ENCODE measurements at regions of chr3 and their contacts with region 1.

Region 1: DNA sequence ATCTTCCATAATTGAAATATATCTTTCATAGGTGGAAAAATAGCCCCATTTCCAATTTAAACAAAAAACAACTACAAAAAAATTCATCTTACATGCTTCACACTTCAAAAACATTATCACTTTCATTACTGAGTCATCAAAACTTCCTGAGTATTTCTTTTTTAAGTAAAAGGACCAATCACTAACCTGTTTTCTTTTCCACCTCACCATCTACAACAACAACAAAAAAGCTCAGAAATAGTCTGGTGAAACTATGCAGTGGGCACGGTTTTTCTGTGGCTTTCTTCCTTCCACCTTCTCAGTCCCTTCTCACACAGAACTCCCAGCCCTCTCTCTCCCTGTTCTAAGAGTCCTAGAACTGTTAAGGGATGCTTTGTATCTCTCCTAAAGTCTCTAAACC is 20.3 kb upstream of the TNIK start:
- DNase-seq: no peak
- H3K4me3 Mint-ChIP-seq: peak overlapping the region; percentile 1
- H3K27ac Mint-ChIP-seq: peak overlapping the region; percentile 63
- H3K4me1 Mint-ChIP-seq: peaks cover 15% of the 10 kb centered on the region
- H3K27me3 Mint-ChIP-seq: no peaks in the 10 kb centered on the region

Region 2: GRCh38 chr3:171491361-171491760 is 10.8 kb after region 1 on chr3:
- CTCF ChIA-PET with region 1: no interaction called
- POLR2A ChIA-PET with region 1: interaction called, 5 read pairs
- intact Hi-C with region 1: loop called (anchors 1 kb)
- DNase-seq: no peak
- H3K4me3 Mint-ChIP-seq: peak overlapping the region; percentile 55
- H3K27ac Mint-ChIP-seq: peak overlapping the region; percentile 57
- H3K4me1 Mint-ChIP-seq: peaks cover 38% of the 10 kb centered on the region
- H3K27me3 Mint-ChIP-seq: no peaks in the 10 kb centered on the region

Region 3: DNA sequence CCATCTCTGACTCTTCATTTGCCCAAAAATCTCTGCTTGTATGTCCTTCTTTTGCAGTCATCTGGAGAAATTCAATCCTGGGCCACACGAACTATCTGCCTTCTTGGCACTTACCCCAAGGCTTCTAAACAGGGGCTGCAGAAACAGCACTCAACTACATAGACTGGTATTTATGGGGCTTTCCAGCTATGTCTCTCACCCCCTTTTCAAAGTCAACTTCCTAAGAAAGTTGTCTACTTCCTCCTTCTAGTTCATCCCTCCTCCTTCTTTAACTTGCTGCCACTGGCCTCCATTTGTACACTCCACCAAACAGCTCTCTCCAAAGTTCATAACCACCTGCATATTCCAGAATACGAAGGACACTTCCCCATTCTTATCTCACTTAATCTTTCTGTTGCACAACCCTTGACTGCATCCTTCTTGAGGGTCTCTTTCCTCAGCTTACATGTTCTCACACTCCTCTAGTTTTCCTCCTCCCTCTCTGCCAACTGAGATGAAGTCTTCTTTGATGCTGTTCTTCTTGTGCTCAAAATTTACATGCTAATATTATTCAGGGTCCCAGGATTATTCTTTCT is 274.6 kb after region 1 on chr3:
- CTCF ChIA-PET with region 1: no interaction called
- POLR2A ChIA-PET with region 1: no interaction called
- intact Hi-C with region 1: no loop called
- DNase-seq: no peak
- H3K4me3 Mint-ChIP-seq: no peak overlapping the region
- H3K27ac Mint-ChIP-seq: no peak overlapping the region
- H3K4me1 Mint-ChIP-seq: no peaks in the 10 kb centered on the region
- H3K27me3 Mint-ChIP-seq: peaks cover 11% of the 10 kb centered on the region

Region 4: GRCh38 chr3:172138795-172139441 is 658.4 kb after region 1 on chr3:
- CTCF ChIA-PET with region 1: no interaction called
- POLR2A ChIA-PET with region 1: no interaction called
- intact Hi-C with region 1: no loop called
- DNase-seq: peak; percentile 66
- H3K4me3 Mint-ChIP-seq: peak overlapping the region; percentile 33
- H3K27ac Mint-ChIP-seq: peak overlapping the region; percentile 71
- H3K4me1 Mint-ChIP-seq: peaks cover 56% of the 10 kb centered on the region
- H3K27me3 Mint-ChIP-seq: no peaks in the 10 kb centered on the region

Measured in activated CD4-positive, alpha-beta memory T cell treated with anti-CD3 and anti-CD28 coated beads for 36 hours (primary cell).